B cell (primary cell): ENCODE measurements at regions of chr1 and their contacts with region 1.

Region 1: GRCh38 chr1:105793536-105794146 is 1262.8 kb upstream of the PRMT6 start:
- DNase-seq: peak; percentile 45
- ATAC-seq: no peak
- H3K4me3 ChIP-seq: no peak overlapping the region
- H3K4me3 Mint-ChIP-seq: no peak overlapping the region
- H3K27ac ChIP-seq: no peak overlapping the region
- H3K27ac Mint-ChIP-seq: no peak overlapping the region
- H3K4me1 ChIP-seq: no peaks in the 10 kb centered on the region
- H3K4me1 Mint-ChIP-seq: peaks cover 4% of the 10 kb centered on the region
- H3K27me3 ChIP-seq: no peaks in the 10 kb centered on the region
- H3K27me3 Mint-ChIP-seq: no peaks in the 10 kb centered on the region
- CTCF ChIP-seq: peak; percentile 66

Region 2: DNA sequence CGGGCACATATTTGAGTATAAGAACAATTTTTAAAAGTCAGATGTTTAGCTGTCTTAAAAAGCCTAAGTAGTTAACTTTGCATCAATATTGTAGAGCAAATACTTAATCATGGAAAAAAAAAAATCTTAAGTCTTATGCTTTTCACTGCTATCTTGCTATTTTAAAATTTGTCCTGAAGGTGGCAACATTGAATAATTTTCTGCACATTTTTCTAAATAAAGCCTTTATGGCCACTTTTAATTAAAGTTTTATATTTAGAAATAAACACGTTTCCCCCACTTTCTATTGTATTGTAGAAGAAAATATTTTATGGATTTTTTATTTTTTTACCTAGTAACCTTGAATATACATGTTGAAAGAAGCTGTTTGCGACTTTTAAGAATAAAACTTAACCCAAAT is 1845.1 kb before region 1 on chr1:
- CTCF ChIA-PET with region 1: interaction called, 3 read pairs
- POLR2A ChIA-PET with region 1: no interaction called
- intact Hi-C with region 1: loop called (anchors 5 kb)
- DNase-seq: no peak
- ATAC-seq: no peak
- H3K4me3 ChIP-seq: no peak overlapping the region
- H3K4me3 Mint-ChIP-seq: no peak overlapping the region
- H3K27ac ChIP-seq: no peak overlapping the region
- H3K27ac Mint-ChIP-seq: no peak overlapping the region
- H3K4me1 ChIP-seq: no peaks in the 10 kb centered on the region
- H3K4me1 Mint-ChIP-seq: no peaks in the 10 kb centered on the region
- H3K27me3 ChIP-seq: no peaks in the 10 kb centered on the region
- H3K27me3 Mint-ChIP-seq: no peaks in the 10 kb centered on the region
- CTCF ChIP-seq: no peak

Region 3: DNA sequence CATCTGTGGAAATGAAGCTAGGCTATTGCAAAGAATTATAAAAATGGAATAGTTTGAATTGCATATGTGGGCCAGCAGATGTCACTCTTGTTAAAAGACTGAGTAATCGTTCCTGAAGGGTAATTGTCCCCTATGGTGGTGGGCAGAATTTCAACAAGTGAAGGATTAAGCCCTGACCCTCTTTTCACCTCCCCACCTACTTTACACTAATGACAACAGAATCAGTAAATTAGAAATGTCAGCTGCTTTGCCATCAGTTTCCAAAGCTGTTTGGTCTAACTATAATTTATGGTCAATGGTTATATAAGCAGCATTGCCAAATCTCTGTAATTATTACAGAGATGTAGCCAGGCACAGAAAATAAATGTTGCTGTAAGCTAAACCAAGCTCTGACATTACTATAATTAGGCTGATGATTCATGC is 1145.4 kb before region 1 on chr1:
- CTCF ChIA-PET with region 1: interaction called, 11 read pairs
- POLR2A ChIA-PET with region 1: no interaction called
- intact Hi-C with region 1: no loop called
- DNase-seq: peak; percentile 38
- ATAC-seq: no peak
- H3K4me3 ChIP-seq: no peak overlapping the region
- H3K4me3 Mint-ChIP-seq: no peak overlapping the region
- H3K27ac ChIP-seq: no peak overlapping the region
- H3K27ac Mint-ChIP-seq: no peak overlapping the region
- H3K4me1 ChIP-seq: no peaks in the 10 kb centered on the region
- H3K4me1 Mint-ChIP-seq: no peaks in the 10 kb centered on the region
- H3K27me3 ChIP-seq: no peaks in the 10 kb centered on the region
- H3K27me3 Mint-ChIP-seq: no peaks in the 10 kb centered on the region
- CTCF ChIP-seq: peak; percentile 61

Region 4: GRCh38 chr1:104780470-104781078 is 1013.1 kb before region 1 on chr1:
- CTCF ChIA-PET with region 1: interaction called, 9 read pairs
- POLR2A ChIA-PET with region 1: no interaction called
- intact Hi-C with region 1: loop called (anchors 5 kb)
- DNase-seq: peak; percentile 50
- ATAC-seq: no peak
- H3K4me3 ChIP-seq: no peak overlapping the region
- H3K4me3 Mint-ChIP-seq: no peak overlapping the region
- H3K27ac ChIP-seq: no peak overlapping the region
- H3K27ac Mint-ChIP-seq: no peak overlapping the region
- H3K4me1 ChIP-seq: no peaks in the 10 kb centered on the region
- H3K4me1 Mint-ChIP-seq: no peaks in the 10 kb centered on the region
- H3K27me3 ChIP-seq: no peaks in the 10 kb centered on the region
- H3K27me3 Mint-ChIP-seq: no peaks in the 10 kb centered on the region
- CTCF ChIP-seq: peak; percentile 90

Region 5: DNA sequence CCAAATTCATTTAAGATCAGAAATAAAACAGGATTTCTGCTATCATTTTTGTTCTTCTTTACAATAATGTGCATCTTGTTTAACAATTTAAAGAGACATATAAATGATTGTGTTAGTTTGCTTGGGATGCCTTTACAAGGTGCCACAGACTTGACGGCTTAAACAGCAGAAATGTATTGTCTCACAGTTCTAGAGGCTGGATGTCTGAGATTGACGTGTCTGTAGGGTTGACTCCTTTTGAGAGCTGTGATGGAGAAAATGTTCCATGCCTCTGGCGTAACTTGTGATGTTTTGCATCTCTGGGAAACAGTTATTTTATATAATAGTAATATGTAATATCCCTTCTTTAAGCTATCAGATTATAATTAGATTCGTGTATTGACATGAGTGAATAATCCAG is 171.2 kb after region 1 on chr1:
- CTCF ChIA-PET with region 1: no interaction called
- POLR2A ChIA-PET with region 1: no interaction called
- intact Hi-C with region 1: no loop called
- DNase-seq: no peak
- ATAC-seq: no peak
- H3K4me3 ChIP-seq: no peak overlapping the region
- H3K4me3 Mint-ChIP-seq: no peak overlapping the region
- H3K27ac ChIP-seq: no peak overlapping the region
- H3K27ac Mint-ChIP-seq: no peak overlapping the region
- H3K4me1 ChIP-seq: no peaks in the 10 kb centered on the region
- H3K4me1 Mint-ChIP-seq: no peaks in the 10 kb centered on the region
- H3K27me3 ChIP-seq: no peaks in the 10 kb centered on the region
- H3K27me3 Mint-ChIP-seq: no peaks in the 10 kb centered on the region
- CTCF ChIP-seq: no peak